Right ventricle myocardium inferior (tissue), 1 donor: ENCODE measurements at regions of chr6 and their contacts with region 1.

Region 1: GRCh38 chr6:160431226-160431625 is 83.0 kb downstream of the SLC22A3 start:
- DNase-seq: no peak
- ATAC-seq: peak; percentile 86

Region 2: GRCh38 chr6:159871906-159872305 is 559.3 kb before region 1 on chr6:
- intact Hi-C with region 1: no loop called
- DNase-seq: no peak
- ATAC-seq: no peak

Region 3: GRCh38 chr6:160221423-160221822 is 209.8 kb before region 1 on chr6:
- intact Hi-C with region 1: loop called (anchors 5 kb)
- DNase-seq: no peak
- ATAC-seq: no peak